Naive thymus-derived CD4-positive, alpha-beta T cell (primary cell): ENCODE measurements at regions of chr1 and their contacts with region 1.

Region 1: DNA sequence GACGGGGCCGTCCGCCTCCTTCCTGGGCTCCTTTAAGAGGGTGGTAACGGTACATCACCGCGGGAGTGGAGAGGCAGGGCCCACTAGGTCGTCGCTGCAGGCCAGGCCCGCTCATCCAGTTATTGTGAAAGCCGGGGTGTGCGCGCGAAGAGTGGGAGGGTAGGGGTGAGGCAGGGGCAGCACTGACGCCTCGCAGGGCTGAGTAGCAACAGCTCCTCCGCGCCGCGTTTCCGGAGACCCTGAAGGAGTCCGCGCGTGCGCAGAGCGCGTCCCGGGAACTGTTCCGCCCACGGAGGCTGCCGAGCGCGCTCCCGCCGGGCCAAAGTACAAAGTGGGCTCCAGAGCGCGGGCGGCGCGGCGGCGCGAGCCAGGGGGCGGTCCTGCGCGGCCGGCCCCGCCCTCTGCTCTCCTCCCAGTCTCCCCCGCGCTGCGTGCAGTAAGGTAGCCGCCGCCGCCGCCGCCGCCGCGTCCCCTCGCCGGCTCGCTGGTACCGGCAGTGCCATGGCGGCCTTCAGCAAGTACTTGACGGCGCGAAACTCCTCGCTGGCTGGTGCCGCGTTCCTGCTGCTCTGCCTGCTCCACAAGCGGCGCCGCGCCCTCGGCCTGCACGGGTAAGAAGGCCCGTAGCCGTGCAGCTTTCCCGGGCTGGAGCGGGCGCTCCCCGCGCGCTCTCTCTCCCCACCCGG is at the start of gene ABCD3:
- DNase-seq: peak; percentile 97 to 99 (median 99)
- ATAC-seq: peak; percentile 97
- H3K4me3 ChIP-seq: peak within 1 kb of the TSS; percentile 79
- H3K4me3 Mint-ChIP-seq: no peak within 1 kb of the TSS
- H3K27ac ChIP-seq: peak within 1 kb of the TSS; percentile 76
- H3K27ac Mint-ChIP-seq: peak within 1 kb of the TSS in 7 of 9 donors; percentile 68 to 91 (median 83)
- H3K4me1 ChIP-seq: peaks cover 10 to 15% of the 10 kb centered on the region in 2 donors
- H3K4me1 Mint-ChIP-seq: peaks cover 25 to 42% (median 40%) of the 10 kb centered on the region in 7 donors
- H3K27me3 ChIP-seq: no peaks in the 10 kb centered on the region
- H3K27me3 Mint-ChIP-seq: peaks cover 0 to 16% (median 0%) of the 10 kb centered on the region in 5 donors
- total RNA-seq, gene ABCD3: 18.0 to 31.2 (median 25.0) TPM

Region 2: GRCh38 chr1:92831762-92832536 is 1586.2 kb before region 1 on chr1 and contains the start of gene RPL5:
- CTCF ChIA-PET with region 1: no interaction called
- POLR2A ChIA-PET with region 1: no interaction called
- intact Hi-C with region 1: loop called (anchors 5 to 10 kb)
- DNase-seq: peak; percentile 94 to 99 (median 98)
- ATAC-seq: peak; percentile 95
- H3K4me3 ChIP-seq: peak within 1 kb of the TSS; percentile 94
- H3K4me3 Mint-ChIP-seq: peak within 1 kb of the TSS; percentile 94 to 100 (median 98)
- H3K27ac ChIP-seq: peak within 1 kb of the TSS; percentile 94
- H3K27ac Mint-ChIP-seq: peak within 1 kb of the TSS; percentile 98 to 100 (median 99)
- H3K4me1 ChIP-seq: peaks cover 16 to 30% of the 10 kb centered on the region in 2 donors
- H3K4me1 Mint-ChIP-seq: peaks cover 29 to 54% (median 44%) of the 10 kb centered on the region in 7 donors
- H3K27me3 ChIP-seq: no peaks in the 10 kb centered on the region
- H3K27me3 Mint-ChIP-seq: peaks cover 0 to 5% (median 0%) of the 10 kb centered on the region in 5 donors
- total RNA-seq, gene RPL5: 764 to 1,693 (median 1,596) TPM

Region 3: GRCh38 chr1:93447516-93448291 is 970.4 kb before region 1 on chr1 and contains the start of gene FNBP1L:
- CTCF ChIA-PET with region 1: no interaction called
- POLR2A ChIA-PET with region 1: no interaction called
- intact Hi-C with region 1: loop called in 1 of 2 experiments (anchors 5 kb)
- DNase-seq: peak; percentile 40 to 60 (median 47)
- ATAC-seq: peak; percentile 87
- H3K4me3 ChIP-seq: peak within 1 kb of the TSS; percentile 61
- H3K4me3 Mint-ChIP-seq: peak within 1 kb of the TSS; percentile 89 to 97 (median 93)
- H3K27ac ChIP-seq: peak within 1 kb of the TSS; percentile 11
- H3K27ac Mint-ChIP-seq: peak within 1 kb of the TSS in 6 of 9 donors; percentile 28 to 94 (median 68)
- H3K4me1 ChIP-seq: peaks cover 10 to 12% of the 10 kb centered on the region in 2 donors
- H3K4me1 Mint-ChIP-seq: peaks cover 8 to 24% (median 22%) of the 10 kb centered on the region in 7 donors
- H3K27me3 ChIP-seq: peaks cover 19 to 22% of the 10 kb centered on the region in 2 donors
- H3K27me3 Mint-ChIP-seq: peaks cover 29 to 70% (median 54%) of the 10 kb centered on the region in 5 donors
- total RNA-seq, gene FNBP1L: 0.07 to 2.6 (median 1.1) TPM

Region 4: DNA sequence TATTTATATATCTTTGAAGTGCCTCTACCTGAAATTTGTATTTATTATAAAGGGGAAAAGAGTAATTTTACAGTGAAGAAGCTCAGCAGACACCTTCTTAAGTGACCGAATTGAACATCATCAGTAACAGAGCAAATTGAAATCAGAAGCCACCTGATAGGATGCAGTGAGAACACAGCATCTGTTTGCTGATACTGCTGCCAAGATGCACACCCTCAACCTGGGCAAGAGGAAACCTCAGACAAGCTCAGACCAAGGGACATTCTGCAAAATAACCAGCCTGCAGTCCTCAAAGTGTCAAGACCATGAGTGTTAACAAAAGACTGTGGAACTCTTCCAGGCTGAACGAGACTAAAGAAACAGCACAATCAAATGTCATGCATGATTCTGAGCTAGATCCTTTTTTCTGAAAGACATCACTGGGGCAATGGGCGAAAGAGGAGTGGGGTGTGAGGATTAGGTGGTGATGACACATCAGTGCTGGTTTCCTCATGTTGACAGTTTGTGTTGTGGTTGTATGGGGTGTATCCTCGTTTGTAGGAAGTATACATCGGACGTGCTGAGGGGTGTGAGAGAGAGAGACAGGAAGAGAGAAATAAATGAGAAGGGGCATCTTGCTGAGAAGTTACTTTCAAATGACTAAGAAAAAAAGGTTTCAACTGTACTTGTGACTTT is 400.8 kb before region 1 on chr1:
- CTCF ChIA-PET with region 1: no interaction called
- POLR2A ChIA-PET with region 1: interaction called, 3 read pairs
- intact Hi-C with region 1: loop called in 1 of 2 experiments (anchors 2 kb)
- DNase-seq: peak in 1 of 9 donors; percentile 30
- ATAC-seq: peak; percentile 87
- H3K4me3 ChIP-seq: no peak overlapping the region
- H3K4me3 Mint-ChIP-seq: peak overlapping the region in 1 of 10 donors; percentile 60
- H3K27ac ChIP-seq: no peak overlapping the region
- H3K27ac Mint-ChIP-seq: peak overlapping the region in 3 of 9 donors; percentile 5 to 76 (median 21)
- H3K4me1 ChIP-seq: peaks cover 0 to 25% of the 10 kb centered on the region in 2 donors
- H3K4me1 Mint-ChIP-seq: peaks cover 0 to 33% (median 4%) of the 10 kb centered on the region in 7 donors
- H3K27me3 ChIP-seq: no peaks in the 10 kb centered on the region
- H3K27me3 Mint-ChIP-seq: peaks cover 0 to 11% (median 7%) of the 10 kb centered on the region in 5 donors

Region 5: GRCh38 chr1:94154989-94155388 is 263.1 kb before region 1 on chr1:
- CTCF ChIA-PET with region 1: no interaction called
- POLR2A ChIA-PET with region 1: no interaction called
- intact Hi-C with region 1: no loop called
- DNase-seq: no peak
- ATAC-seq: no peak
- H3K4me3 ChIP-seq: no peak overlapping the region
- H3K4me3 Mint-ChIP-seq: no peak overlapping the region
- H3K27ac ChIP-seq: no peak overlapping the region
- H3K27ac Mint-ChIP-seq: no peak overlapping the region
- H3K4me1 ChIP-seq: no peaks in the 10 kb centered on the region
- H3K4me1 Mint-ChIP-seq: no peaks in the 10 kb centered on the region
- H3K27me3 ChIP-seq: no peaks in the 10 kb centered on the region
- H3K27me3 Mint-ChIP-seq: peaks cover 4 to 18% (median 9%) of the 10 kb centered on the region in 5 donors

Region 6: GRCh38 chr1:94296018-94296417 is 122.1 kb before region 1 on chr1:
- CTCF ChIA-PET with region 1: no interaction called
- POLR2A ChIA-PET with region 1: no interaction called
- intact Hi-C with region 1: no loop called
- DNase-seq: no peak
- ATAC-seq: no peak
- H3K4me3 ChIP-seq: no peak overlapping the region
- H3K4me3 Mint-ChIP-seq: no peak overlapping the region
- H3K27ac ChIP-seq: no peak overlapping the region
- H3K27ac Mint-ChIP-seq: no peak overlapping the region
- H3K4me1 ChIP-seq: no peaks in the 10 kb centered on the region
- H3K4me1 Mint-ChIP-seq: peaks cover 0 to 3% (median 0%) of the 10 kb centered on the region in 7 donors
- H3K27me3 ChIP-seq: peaks cover 0 to 3% of the 10 kb centered on the region in 2 donors
- H3K27me3 Mint-ChIP-seq: peaks cover 6 to 35% (median 20%) of the 10 kb centered on the region in 5 donors

Region 7: DNA sequence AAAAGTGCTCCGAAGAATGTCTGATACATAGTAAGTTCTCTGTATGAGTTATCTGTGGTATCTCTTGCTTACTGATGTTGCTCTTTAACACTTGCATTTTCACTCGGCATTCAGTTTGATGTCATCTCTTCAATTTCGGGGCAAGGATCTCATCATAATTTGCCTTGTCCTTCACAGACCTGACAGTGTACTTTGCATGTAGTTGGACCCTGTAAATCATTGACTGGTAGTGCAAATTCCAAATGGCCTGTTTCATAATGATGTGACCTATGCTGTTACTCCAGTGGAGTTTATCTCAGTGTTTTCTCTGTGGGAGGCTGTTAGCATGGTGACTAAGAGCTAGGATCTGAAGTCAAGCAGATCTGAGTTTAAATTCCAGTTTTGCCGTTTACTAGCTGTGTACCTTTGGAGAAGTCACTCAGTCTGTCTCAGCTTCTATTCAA is 34.1 kb before region 1 on chr1:
- CTCF ChIA-PET with region 1: no interaction called
- POLR2A ChIA-PET with region 1: interaction called, 9 read pairs
- intact Hi-C with region 1: loop called (anchors 2 to 5 kb)
- DNase-seq: peak in 2 of 9 donors; percentile 2 to 21
- ATAC-seq: no peak
- H3K4me3 ChIP-seq: no peak overlapping the region
- H3K4me3 Mint-ChIP-seq: peak overlapping the region in 8 of 10 donors; percentile 3 to 84 (median 60)
- H3K27ac ChIP-seq: no peak overlapping the region
- H3K27ac Mint-ChIP-seq: peak overlapping the region; percentile 32 to 91 (median 82)
- H3K4me1 ChIP-seq: peaks cover 0 to 23% of the 10 kb centered on the region in 2 donors
- H3K4me1 Mint-ChIP-seq: peaks cover 15 to 40% (median 34%) of the 10 kb centered on the region in 7 donors
- H3K27me3 ChIP-seq: no peaks in the 10 kb centered on the region
- H3K27me3 Mint-ChIP-seq: peaks cover 0 to 3% (median 0%) of the 10 kb centered on the region in 5 donors

Region 8: DNA sequence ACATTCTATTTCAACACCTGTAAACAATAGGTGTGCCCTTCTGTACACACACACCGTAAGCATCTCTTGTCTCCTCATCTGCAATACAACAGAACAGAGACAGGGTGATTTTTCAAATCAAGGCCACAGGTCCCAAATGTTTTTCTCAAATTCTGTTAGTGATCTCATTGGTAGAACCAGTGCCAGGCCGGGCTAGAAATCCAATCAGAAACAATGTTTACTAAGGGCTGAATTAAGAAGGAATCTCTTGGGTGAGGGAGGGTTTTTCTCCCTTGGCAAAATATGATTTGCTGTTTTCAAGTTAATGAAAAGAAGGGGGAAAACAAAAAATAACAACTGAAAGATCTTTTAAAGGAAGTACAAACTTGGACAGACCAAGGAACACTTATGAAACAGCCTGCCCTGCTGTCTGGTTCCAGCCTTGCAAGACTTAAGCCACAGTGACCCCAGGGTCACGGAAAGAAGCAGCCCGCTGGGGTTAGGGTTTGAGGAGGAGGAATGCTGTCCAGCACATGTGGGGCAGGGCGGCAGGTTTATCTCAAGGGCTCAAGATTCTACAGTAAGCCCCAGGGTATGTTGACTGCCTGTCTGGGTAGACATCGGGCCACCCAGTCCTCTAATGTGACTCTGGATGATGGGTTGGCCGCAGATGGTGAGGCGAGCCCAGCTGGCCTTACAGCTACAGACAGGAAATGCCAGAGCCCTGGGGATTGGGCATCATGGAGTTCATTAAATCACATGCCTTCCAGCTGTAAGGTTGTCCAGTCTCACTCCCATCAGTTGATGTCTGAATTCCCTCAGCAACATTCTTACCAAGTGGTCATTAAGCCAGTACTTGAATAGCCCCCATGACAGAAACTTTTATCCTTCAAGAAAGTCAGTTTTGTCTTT is 328.8 kb after region 1 on chr1:
- CTCF ChIA-PET with region 1: no interaction called
- POLR2A ChIA-PET with region 1: no interaction called
- intact Hi-C with region 1: no loop called
- DNase-seq: no peak
- ATAC-seq: no peak
- H3K4me3 ChIP-seq: no peak overlapping the region
- H3K4me3 Mint-ChIP-seq: no peak overlapping the region
- H3K27ac ChIP-seq: no peak overlapping the region
- H3K27ac Mint-ChIP-seq: no peak overlapping the region
- H3K4me1 ChIP-seq: no peaks in the 10 kb centered on the region
- H3K4me1 Mint-ChIP-seq: no peaks in the 10 kb centered on the region
- H3K27me3 ChIP-seq: peaks cover 0 to 3% of the 10 kb centered on the region in 2 donors
- H3K27me3 Mint-ChIP-seq: peaks cover 3 to 22% (median 14%) of the 10 kb centered on the region in 5 donors

Region 9: DNA sequence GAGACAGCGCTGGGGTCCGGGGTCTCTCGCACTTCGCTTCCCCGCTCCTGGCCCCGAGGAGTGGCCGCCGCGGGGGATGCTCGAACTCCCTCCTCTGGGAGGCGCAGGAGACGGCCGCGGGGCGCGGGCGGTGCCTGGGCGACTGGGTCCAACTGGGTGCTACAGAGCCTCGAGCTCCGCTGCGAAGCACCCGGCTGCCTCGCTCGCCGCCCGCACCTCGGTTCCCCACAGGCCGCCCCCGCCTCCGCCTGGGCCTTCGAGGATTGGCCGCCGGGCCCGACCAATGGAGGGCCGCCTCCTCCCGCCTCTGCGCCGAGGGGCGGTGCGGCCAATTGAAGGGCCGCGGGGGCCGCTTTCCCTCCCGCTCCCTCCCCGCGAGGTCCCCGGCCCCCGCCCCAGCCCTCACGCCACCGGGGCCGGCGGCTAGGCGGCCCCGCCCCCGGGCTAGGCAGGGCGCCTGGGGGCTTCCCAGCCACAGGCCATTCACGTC is 508.8 kb after region 1 on chr1 and contains the start of gene CNN3:
- CTCF ChIA-PET with region 1: no interaction called
- POLR2A ChIA-PET with region 1: no interaction called
- intact Hi-C with region 1: loop called in 1 of 2 experiments (anchors 1 kb)
- DNase-seq: peak; percentile 56 to 78 (median 68)
- ATAC-seq: peak; percentile 91
- H3K4me3 ChIP-seq: peak within 1 kb of the TSS; percentile 39
- H3K4me3 Mint-ChIP-seq: peak within 1 kb of the TSS; percentile 88 to 97 (median 94)
- H3K27ac ChIP-seq: peak within 1 kb of the TSS; percentile 63
- H3K27ac Mint-ChIP-seq: peak within 1 kb of the TSS; percentile 37 to 92 (median 84)
- H3K4me1 ChIP-seq: no peaks in the 10 kb centered on the region
- H3K4me1 Mint-ChIP-seq: peaks cover 12 to 38% (median 34%) of the 10 kb centered on the region in 7 donors
- H3K27me3 ChIP-seq: no peaks in the 10 kb centered on the region
- H3K27me3 Mint-ChIP-seq: peaks cover 18 to 57% (median 26%) of the 10 kb centered on the region in 5 donors
- total RNA-seq, gene CNN3: 4.4 to 14.9 (median 7.4) TPM

Region 10: GRCh38 chr1:95233737-95234500 is 815.8 kb after region 1 on chr1 and contains the start of gene RWDD3:
- CTCF ChIA-PET with region 1: no interaction called
- POLR2A ChIA-PET with region 1: interaction called, 3 read pairs
- intact Hi-C with region 1: loop called (anchors 1 kb)
- DNase-seq: peak; percentile 86 to 96 (median 93)
- ATAC-seq: peak; percentile 98
- H3K4me3 ChIP-seq: peak within 1 kb of the TSS; percentile 78
- H3K4me3 Mint-ChIP-seq: peak within 1 kb of the TSS; percentile 89 to 97 (median 92)
- H3K27ac ChIP-seq: peak within 1 kb of the TSS; percentile 79
- H3K27ac Mint-ChIP-seq: peak within 1 kb of the TSS; percentile 86 to 97 (median 91)
- H3K4me1 ChIP-seq: peaks cover 6 to 12% of the 10 kb centered on the region in 2 donors
- H3K4me1 Mint-ChIP-seq: peaks cover 23 to 54% (median 46%) of the 10 kb centered on the region in 7 donors
- H3K27me3 ChIP-seq: no peaks in the 10 kb centered on the region
- H3K27me3 Mint-ChIP-seq: peaks cover 16 to 30% (median 23%) of the 10 kb centered on the region in 5 donors
- total RNA-seq, gene RWDD3: 9.1 to 27.9 (median 20.0) TPM